PC-3 (cell line): ENCODE measurements at regions of chr5 and their contacts with region 1.

Region 1: GRCh38 chr5:58460732-58461286 is 923 bp upstream of the PLK2 start:
- DNase-seq: peak; percentile 88
- ATAC-seq: peak; percentile 67
- H3K4me3 ChIP-seq: peak overlapping the region; percentile 99
- H3K27ac ChIP-seq: peak overlapping the region; percentile 84
- H3K4me1 ChIP-seq: peaks cover 32% of the 10 kb centered on the region
- H3K27me3 ChIP-seq: no peaks in the 10 kb centered on the region
- CTCF ChIP-seq: peak; percentile 70

Region 2: DNA sequence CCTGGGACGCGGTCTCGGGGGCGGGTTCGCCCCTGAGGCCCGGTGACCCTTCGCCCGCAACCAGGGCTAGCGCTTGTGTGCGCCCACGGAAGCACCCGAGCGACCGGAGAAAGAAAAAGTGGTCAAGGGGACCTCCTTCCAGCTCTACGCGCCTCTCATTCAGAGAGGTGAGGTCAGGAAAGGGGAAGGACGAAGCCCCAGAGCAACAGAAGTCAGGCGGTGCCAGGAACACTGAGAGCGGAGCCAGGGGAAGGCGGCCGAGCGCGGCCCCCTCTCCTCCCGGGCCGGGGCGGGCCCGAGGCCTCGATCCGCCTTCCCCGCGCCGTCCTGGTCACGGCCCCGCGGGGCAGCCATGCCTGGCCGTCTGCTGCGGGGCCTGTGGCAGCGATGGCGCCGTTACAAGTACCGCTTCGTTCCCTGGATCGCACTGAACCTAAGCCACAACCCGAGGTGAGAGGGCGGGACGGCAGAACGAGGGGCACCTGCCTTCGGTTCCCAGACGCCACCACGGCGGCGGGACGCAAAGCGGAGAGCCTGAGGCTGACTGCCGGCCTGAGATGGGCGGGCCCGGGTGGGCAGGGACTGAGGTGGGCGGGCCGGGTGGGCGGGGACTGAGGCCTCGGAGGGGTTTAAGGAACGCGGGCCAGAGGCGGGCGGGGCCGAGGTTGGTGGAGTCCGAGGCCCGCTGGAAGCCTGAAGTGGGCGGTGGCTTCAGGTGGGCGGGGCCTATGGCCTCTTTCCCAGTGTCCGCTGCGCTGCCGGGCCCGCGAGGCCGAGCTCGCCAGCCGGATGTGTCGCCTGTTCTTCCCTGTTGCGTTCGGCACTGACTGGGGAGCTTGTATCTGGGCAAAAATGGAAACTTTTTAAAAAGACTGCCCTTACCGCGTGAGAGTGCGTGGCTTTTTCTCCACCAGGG is 1551.3 kb before region 1 on chr5 and contains the start of gene SETD9:
- CTCF ChIA-PET with region 1: no interaction called
- POLR2A ChIA-PET with region 1: no interaction called
- intact Hi-C with region 1: loop called (anchors 10 kb)
- DNase-seq: peak; percentile 92
- ATAC-seq: peak; percentile 88
- H3K4me3 ChIP-seq: peak within 1 kb of the TSS; percentile 83
- H3K27ac ChIP-seq: peak within 1 kb of the TSS; percentile 69
- H3K4me1 ChIP-seq: peaks cover 6% of the 10 kb centered on the region
- H3K27me3 ChIP-seq: no peaks in the 10 kb centered on the region
- CTCF ChIP-seq: no peak
- total RNA-seq, gene SETD9: 4.5 and 6.0 TPM in 2 replicates

Region 3: GRCh38 chr5:57499262-57500050 is 961.4 kb before region 1 on chr5:
- CTCF ChIA-PET with region 1: interaction called, 8 read pairs
- POLR2A ChIA-PET with region 1: no interaction called
- intact Hi-C with region 1: loop called (anchors 1 kb)
- DNase-seq: peak; percentile 71
- ATAC-seq: peak; percentile 41; the same call in 1 of the 2 replicates
- H3K4me3 ChIP-seq: peak overlapping the region; percentile 19; the same call in 1 of the 2 replicates
- H3K27ac ChIP-seq: no peak overlapping the region
- H3K4me1 ChIP-seq: peaks cover 35% of the 10 kb centered on the region
- H3K27me3 ChIP-seq: no peaks in the 10 kb centered on the region
- CTCF ChIP-seq: peak; percentile 77

Region 4: DNA sequence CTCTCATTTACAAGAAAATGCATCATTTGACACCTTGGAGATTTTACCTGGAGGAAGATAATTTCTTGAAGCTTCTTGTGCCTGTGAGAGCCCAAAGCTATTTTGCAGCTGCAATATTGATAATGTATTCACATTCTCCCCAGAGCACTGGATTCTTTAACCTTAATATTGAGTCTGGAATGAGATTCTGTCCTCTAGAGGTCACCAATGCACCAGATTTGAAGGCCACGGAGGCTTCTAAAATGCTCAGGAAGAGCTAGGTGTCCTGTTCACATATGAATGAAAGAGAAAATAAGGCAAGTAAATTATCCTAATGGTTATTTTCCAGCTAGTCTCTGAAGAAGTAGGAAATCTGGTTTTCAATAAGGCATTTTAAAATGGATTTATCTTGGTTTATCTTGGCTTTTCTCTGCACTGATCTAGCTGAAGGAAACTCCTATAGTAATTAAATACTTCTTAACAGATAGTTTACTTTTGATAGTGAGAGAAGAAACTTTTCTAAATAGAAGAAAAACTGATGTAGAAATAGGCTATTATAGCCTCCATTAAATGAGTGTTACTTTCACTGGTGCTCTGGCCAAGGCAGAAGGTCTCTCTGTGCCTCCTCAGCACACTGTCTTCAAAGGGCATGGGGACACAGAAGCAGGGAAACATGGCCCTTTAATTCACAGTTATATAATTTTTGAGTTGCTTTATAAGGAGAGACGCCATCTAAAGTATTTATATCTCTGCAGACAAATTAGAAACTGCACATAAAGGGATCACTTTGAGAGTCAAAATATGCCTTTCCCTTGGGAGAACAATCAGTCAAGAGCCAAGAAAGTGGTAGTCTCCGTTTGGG is 681.2 kb before region 1 on chr5:
- CTCF ChIA-PET with region 1: interaction called, 17 read pairs
- POLR2A ChIA-PET with region 1: no interaction called
- intact Hi-C with region 1: loop called (anchors 1 kb)
- DNase-seq: peak; percentile 83
- ATAC-seq: peak; percentile 44
- H3K4me3 ChIP-seq: no peak overlapping the region
- H3K27ac ChIP-seq: peak overlapping the region; percentile 40
- H3K4me1 ChIP-seq: peaks cover 47% of the 10 kb centered on the region
- H3K27me3 ChIP-seq: no peaks in the 10 kb centered on the region
- CTCF ChIP-seq: peak; percentile 71

Region 5: GRCh38 chr5:57887851-57888621 is 572.8 kb before region 1 on chr5:
- CTCF ChIA-PET with region 1: interaction called, 9 read pairs
- POLR2A ChIA-PET with region 1: no interaction called
- intact Hi-C with region 1: loop called (anchors 1 kb)
- DNase-seq: peak; percentile 69
- ATAC-seq: peak; percentile 89
- H3K4me3 ChIP-seq: no peak overlapping the region
- H3K27ac ChIP-seq: no peak overlapping the region
- H3K4me1 ChIP-seq: peaks cover 29% of the 10 kb centered on the region
- H3K27me3 ChIP-seq: no peaks in the 10 kb centered on the region
- CTCF ChIP-seq: peak; percentile 73

Region 6: GRCh38 chr5:58133631-58134296 is 327.0 kb before region 1 on chr5:
- CTCF ChIA-PET with region 1: no interaction called
- POLR2A ChIA-PET with region 1: no interaction called
- intact Hi-C with region 1: loop called (anchors 2 kb)
- DNase-seq: peak; percentile 66
- ATAC-seq: peak; percentile 70
- H3K4me3 ChIP-seq: 0 out of 2 replicates have a peak overlapping the region, but pooled peaks have one; percentile 4
- H3K27ac ChIP-seq: peak overlapping the region; percentile 94
- H3K4me1 ChIP-seq: peaks cover 41% of the 10 kb centered on the region
- H3K27me3 ChIP-seq: no peaks in the 10 kb centered on the region
- CTCF ChIP-seq: no peak

Region 7: GRCh38 chr5:58322453-58322852 is 138.4 kb before region 1 on chr5:
- CTCF ChIA-PET with region 1: no interaction called
- POLR2A ChIA-PET with region 1: no interaction called
- intact Hi-C with region 1: loop called (anchors 5 kb)
- DNase-seq: peak; percentile 51
- ATAC-seq: peak; percentile 29; the same call in 1 of the 2 replicates
- H3K4me3 ChIP-seq: no peak overlapping the region; the same call in 1 of the 2 replicates
- H3K27ac ChIP-seq: no peak overlapping the region
- H3K4me1 ChIP-seq: peaks cover 25% of the 10 kb centered on the region
- H3K27me3 ChIP-seq: no peaks in the 10 kb centered on the region
- CTCF ChIP-seq: no peak